HAP-1 (cell line): ENCODE measurements at regions of chr13 and their contacts with region 1.

Region 1: GRCh38 chr13:75219479-75220237 is 262.3 kb downstream of the TBC1D4 start:
- DNase-seq: peak; percentile 65 to 90
- H3K4me3 ChIP-seq: peak overlapping the region; percentile 5; the same call in 1 of the 2 replicates
- H3K4me1 ChIP-seq: no peaks in the 10 kb centered on the region
- H3K27me3 ChIP-seq: peaks cover 5% of the 10 kb centered on the region; the same call in 1 of the 2 replicates

Region 2: GRCh38 chr13:73754727-73755292 is 1464.8 kb before region 1 on chr13:
- in situ Hi-C with region 1: loop called (anchors 25 kb)
- DNase-seq: peak; percentile 65 to 80
- H3K4me3 ChIP-seq: no peak overlapping the region
- H3K4me1 ChIP-seq: peaks cover 9% of the 10 kb centered on the region
- H3K27me3 ChIP-seq: no peaks in the 10 kb centered on the region

Region 3: DNA sequence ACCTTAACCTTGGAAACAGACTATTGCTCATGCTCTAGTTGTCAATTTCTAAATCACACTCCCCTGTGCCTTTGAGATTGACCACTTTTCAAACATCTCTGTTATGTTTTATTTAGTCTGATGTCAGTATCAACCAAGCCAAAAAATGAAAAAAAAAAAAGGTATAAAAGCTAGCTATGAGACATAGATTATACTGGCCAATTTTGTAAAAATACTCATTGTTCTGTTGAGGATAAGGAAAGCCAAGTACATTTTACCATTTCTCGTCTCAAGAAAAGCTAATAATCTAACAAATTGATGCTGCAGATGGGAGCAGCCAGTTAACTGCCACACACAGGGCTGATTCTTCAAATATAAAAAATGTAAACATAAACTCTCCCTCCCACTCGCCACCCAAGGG is 512.9 kb before region 1 on chr13:
- in situ Hi-C with region 1: no loop called
- DNase-seq: no peak
- H3K4me3 ChIP-seq: no peak overlapping the region
- H3K4me1 ChIP-seq: no peaks in the 10 kb centered on the region
- H3K27me3 ChIP-seq: no peaks in the 10 kb centered on the region

Region 4: DNA sequence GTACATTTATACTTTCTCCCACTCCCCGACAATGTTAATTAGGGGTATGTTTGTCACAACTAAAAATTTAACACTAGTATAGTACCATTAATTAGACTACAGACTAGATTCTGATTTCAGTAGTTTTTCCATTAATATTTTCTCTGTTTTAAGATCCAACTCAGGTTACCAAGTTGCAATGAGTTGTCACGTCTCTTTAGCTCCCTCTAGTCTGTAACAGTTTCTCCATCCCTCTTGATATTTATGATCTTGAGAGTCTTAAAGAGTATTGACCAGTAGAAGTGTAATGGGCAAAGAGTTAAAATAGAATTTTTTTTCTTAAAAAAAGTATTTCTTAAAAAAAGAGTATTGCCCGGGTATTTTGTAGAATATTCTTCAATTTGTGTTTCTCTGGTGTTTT is 335.8 kb before region 1 on chr13:
- in situ Hi-C with region 1: no loop called
- DNase-seq: no peak
- H3K4me3 ChIP-seq: no peak overlapping the region
- H3K4me1 ChIP-seq: no peaks in the 10 kb centered on the region
- H3K27me3 ChIP-seq: no peaks in the 10 kb centered on the region

Region 5: DNA sequence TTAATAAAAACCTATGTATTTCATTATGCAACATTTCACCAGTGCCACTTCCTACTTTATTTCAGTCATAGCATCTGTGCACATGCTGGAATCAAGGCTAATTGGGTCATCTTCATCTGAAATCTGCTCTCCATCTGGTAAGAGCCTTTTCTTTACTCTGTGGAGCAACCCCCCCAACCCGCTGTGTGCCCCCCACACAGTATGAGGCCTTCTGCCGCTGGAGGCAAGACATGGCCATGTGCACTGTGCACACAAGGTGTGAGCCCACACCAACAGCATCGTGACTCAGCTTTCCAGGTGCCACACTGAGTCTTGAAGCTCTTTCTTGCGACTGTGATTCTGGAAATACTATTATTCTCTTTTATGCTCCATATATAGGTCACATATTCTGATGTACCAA is 208.7 kb before region 1 on chr13:
- in situ Hi-C with region 1: no loop called
- DNase-seq: no peak
- H3K4me3 ChIP-seq: no peak overlapping the region
- H3K4me1 ChIP-seq: no peaks in the 10 kb centered on the region
- H3K27me3 ChIP-seq: no peaks in the 10 kb centered on the region

Region 6: DNA sequence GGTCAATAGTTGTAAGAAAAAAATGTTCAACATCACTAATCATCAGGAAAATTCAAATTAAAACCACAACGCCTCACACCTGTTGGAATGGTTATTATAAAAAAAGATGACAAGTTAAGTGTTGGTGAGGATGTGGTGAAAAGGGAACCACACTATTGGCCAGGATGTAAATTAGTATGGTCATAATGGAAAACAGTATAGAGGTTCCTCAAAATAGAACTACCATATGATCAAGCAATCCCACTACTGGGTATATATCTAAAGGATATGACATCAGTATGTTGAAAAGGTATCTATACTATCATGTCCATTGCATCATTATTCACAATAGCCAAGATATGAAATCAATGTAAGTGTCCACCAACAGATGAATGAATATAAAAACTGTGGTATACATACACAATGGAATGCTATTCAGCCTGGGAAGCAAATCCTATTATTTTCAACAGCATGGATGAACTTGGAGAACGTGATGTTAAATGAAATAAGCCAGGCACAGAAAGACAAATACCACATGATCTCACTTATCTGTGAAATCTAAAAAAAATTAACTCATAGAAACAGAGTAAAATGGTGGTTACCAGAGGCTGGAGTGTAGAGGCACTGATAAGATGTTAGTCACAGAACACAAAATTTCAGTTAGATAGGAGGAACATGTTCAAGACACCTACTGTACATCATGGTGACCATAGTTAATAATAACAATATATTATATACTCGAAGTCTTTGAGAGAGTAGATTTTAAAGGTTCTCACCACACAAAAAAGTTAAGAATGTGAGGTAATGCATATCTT is 205.8 kb after region 1 on chr13:
- in situ Hi-C with region 1: no loop called
- DNase-seq: no peak
- H3K4me3 ChIP-seq: no peak overlapping the region
- H3K4me1 ChIP-seq: no peaks in the 10 kb centered on the region
- H3K27me3 ChIP-seq: no peaks in the 10 kb centered on the region